ENCODE measurements at regions of chr7 and their contacts with region 1.

Region 1: GRCh38 chr7:99408379-99409191 is at the starts of genes BUD31 and PDAP1:
- DNase-seq: peak; percentile 97
- H3K4me3 Mint-ChIP-seq: peak within 1 kb of the TSS; percentile 89
- H3K27ac Mint-ChIP-seq: peak within 1 kb of the TSS; percentile 92
- H3K4me1 Mint-ChIP-seq: peaks cover 49% of the 10 kb centered on the region
- H3K27me3 Mint-ChIP-seq: no peaks in the 10 kb centered on the region
- total RNA-seq, gene BUD31: 160 to 176 TPM
- total RNA-seq, gene PDAP1: 169 to 194 TPM

Region 2: GRCh38 chr7:99325545-99326407 is 82.8 kb before region 1 on chr7 and contains the start of gene ARPC1A:
- CTCF ChIA-PET with region 1: interaction called, 3 read pairs
- intact Hi-C with region 1: loop called (anchors 1 kb)
- DNase-seq: peak; percentile 90
- H3K4me3 Mint-ChIP-seq: peak within 1 kb of the TSS; percentile 80
- H3K27ac Mint-ChIP-seq: peak within 1 kb of the TSS; percentile 88
- H3K4me1 Mint-ChIP-seq: peaks cover 41% of the 10 kb centered on the region
- H3K27me3 Mint-ChIP-seq: no peaks in the 10 kb centered on the region
- total RNA-seq, gene ARPC1A: 41.5 to 47.7 TPM

Region 3: GRCh38 chr7:99357701-99358490 is 50.7 kb before region 1 on chr7:
- CTCF ChIA-PET with region 1: no interaction called
- intact Hi-C with region 1: no loop called
- DNase-seq: no peak
- H3K4me3 Mint-ChIP-seq: no peak overlapping the region
- H3K27ac Mint-ChIP-seq: peak overlapping the region; percentile 46
- H3K4me1 Mint-ChIP-seq: no peaks in the 10 kb centered on the region
- H3K27me3 Mint-ChIP-seq: no peaks in the 10 kb centered on the region

Region 4: GRCh38 chr7:99380032-99380822 is 28.4 kb before region 1 on chr7:
- CTCF ChIA-PET with region 1: interaction called, 4 read pairs
- intact Hi-C with region 1: loop called (anchors 1 kb)
- DNase-seq: peak; percentile 69
- H3K4me3 Mint-ChIP-seq: peak overlapping the region; percentile 81
- H3K27ac Mint-ChIP-seq: peak overlapping the region; percentile 97
- H3K4me1 Mint-ChIP-seq: peaks cover 61% of the 10 kb centered on the region
- H3K27me3 Mint-ChIP-seq: no peaks in the 10 kb centered on the region

Region 5: DNA sequence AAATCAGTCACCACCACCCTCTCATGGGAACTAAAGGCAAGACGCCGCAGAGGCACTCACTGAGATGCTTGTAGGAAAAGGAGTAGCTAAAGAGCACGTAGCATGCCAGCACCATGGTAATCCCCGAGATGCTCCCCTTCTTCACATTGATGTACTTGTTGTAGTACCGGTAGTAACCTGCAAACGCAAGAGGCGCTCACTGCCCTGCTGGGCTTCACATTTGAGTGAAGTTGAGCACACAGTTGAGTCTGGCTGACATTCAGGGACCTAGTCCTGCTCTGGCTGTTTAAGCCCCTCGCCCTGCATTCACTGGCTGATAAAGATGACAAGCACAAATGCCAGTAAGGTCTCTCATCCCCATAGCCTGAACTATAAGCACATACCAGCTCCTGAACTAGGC is 50.5 kb after region 1 on chr7:
- CTCF ChIA-PET with region 1: no interaction called
- intact Hi-C with region 1: no loop called
- DNase-seq: peak; percentile 45
- H3K4me3 Mint-ChIP-seq: no peak overlapping the region
- H3K27ac Mint-ChIP-seq: no peak overlapping the region
- H3K4me1 Mint-ChIP-seq: peaks cover 26% of the 10 kb centered on the region
- H3K27me3 Mint-ChIP-seq: no peaks in the 10 kb centered on the region

Region 6: GRCh38 chr7:99472561-99473243 is 64.1 kb after region 1 on chr7 and contains the start of gene ZNF789:
- CTCF ChIA-PET with region 1: no interaction called
- intact Hi-C with region 1: loop called (anchors 1 kb)
- DNase-seq: peak; percentile 99
- H3K4me3 Mint-ChIP-seq: peak within 1 kb of the TSS; percentile 95
- H3K27ac Mint-ChIP-seq: peak within 1 kb of the TSS; percentile 83
- H3K4me1 Mint-ChIP-seq: peaks cover 32% of the 10 kb centered on the region
- H3K27me3 Mint-ChIP-seq: no peaks in the 10 kb centered on the region
- total RNA-seq, gene ZNF789: 8.0 to 9.8 TPM

Region 7: DNA sequence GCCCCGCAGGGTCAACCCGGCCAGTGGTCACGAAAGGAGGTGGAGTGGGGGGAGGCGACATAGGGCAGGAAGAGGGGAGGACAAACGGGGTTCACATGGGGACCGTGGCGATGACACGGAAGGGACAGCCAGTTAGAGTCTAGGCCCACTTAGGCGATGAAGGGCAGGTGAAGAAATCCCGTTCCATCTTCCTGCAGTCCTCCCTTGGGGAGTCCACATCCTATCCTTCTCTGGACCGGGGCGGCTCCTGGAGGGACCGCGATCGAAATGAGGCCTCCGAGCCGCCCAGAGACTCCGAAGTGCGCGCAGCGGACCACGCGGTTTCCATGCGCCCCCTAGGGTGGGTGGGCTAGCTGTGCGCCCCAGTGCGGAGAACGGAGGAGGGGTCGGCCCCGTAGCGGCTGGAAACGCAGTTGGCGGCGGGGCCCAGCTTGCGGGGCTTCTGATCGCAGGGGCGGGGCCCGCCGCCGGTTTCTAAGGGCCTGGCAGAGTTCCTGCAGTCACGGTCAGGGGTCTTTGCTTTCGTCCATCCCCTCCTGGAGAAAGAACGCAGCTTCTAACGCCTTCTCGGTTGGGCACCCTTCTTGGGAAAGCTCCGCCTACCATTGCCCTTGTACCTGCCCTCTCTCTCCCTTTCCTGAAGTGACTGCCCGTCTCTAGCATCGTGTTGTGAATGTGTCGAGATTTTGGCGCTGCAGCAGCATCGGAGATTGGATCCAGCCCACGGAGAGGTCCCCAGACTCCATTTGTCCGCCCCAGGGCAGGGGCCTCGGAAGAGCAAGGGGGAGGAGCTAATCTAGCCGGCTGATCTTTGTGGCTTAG is 171.6 kb after region 1 on chr7:
- CTCF ChIA-PET with region 1: no interaction called
- intact Hi-C with region 1: loop called (anchors 1 kb)
- DNase-seq: peak; percentile 69
- H3K4me3 Mint-ChIP-seq: peak overlapping the region; percentile 83
- H3K27ac Mint-ChIP-seq: peak overlapping the region; percentile 51
- H3K4me1 Mint-ChIP-seq: peaks cover 5% of the 10 kb centered on the region
- H3K27me3 Mint-ChIP-seq: no peaks in the 10 kb centered on the region

Region 8: GRCh38 chr7:100126931-100127865 is 718.6 kb after region 1 on chr7 and contains the start of gene MBLAC1:
- CTCF ChIA-PET with region 1: no interaction called
- intact Hi-C with region 1: loop called (anchors 5 kb)
- DNase-seq: peak; percentile 94
- H3K4me3 Mint-ChIP-seq: peak within 1 kb of the TSS; percentile 100
- H3K27ac Mint-ChIP-seq: peak within 1 kb of the TSS; percentile 99
- H3K4me1 Mint-ChIP-seq: peaks cover 30% of the 10 kb centered on the region
- H3K27me3 Mint-ChIP-seq: no peaks in the 10 kb centered on the region
- total RNA-seq, gene MBLAC1: 2.3 to 2.9 TPM

Measured in activated naive CD4-positive, alpha-beta T cell treated with anti-CD3 and anti-CD28 coated beads for 36 hours (primary cell).